Caco-2 (cell line): ENCODE measurements at regions of chr5 and their contacts with region 1.

Region 1: GRCh38 chr5:36870399-36871040 is 6.0 kb upstream of the NIPBL start:
- DNase-seq: peak in 1 of 2 experiments; percentile 61
- H3K4me3 ChIP-seq: no peak overlapping the region
- H3K4me3 Mint-ChIP-seq: no peak overlapping the region
- H3K27ac Mint-ChIP-seq: no peak overlapping the region
- H3K4me1 ChIP-seq: 0 out of 2 replicates have a peak, but pooled peaks cover 10% of the 10 kb centered on the region
- H3K4me1 Mint-ChIP-seq: peaks cover 13% of the 10 kb centered on the region
- H3K27me3 ChIP-seq: no peaks in the 10 kb centered on the region
- H3K27me3 Mint-ChIP-seq: no peaks in the 10 kb centered on the region
- CTCF ChIP-seq: peak; percentile 41 to 59

Region 2: GRCh38 chr5:36734422-36734821 is 136.1 kb before region 1 on chr5:
- CTCF ChIA-PET with region 1: interaction called, 16 read pairs
- POLR2A ChIA-PET with region 1: no interaction called
- intact Hi-C with region 1: loop called (anchors 1 kb)
- DNase-seq: peak; percentile 56 to 58
- H3K4me3 ChIP-seq: no peak overlapping the region
- H3K4me3 Mint-ChIP-seq: no peak overlapping the region
- H3K27ac Mint-ChIP-seq: no peak overlapping the region
- H3K4me1 ChIP-seq: peaks cover 1% of the 10 kb centered on the region; the same call in 1 of the 2 replicates
- H3K4me1 Mint-ChIP-seq: peaks cover 4% of the 10 kb centered on the region
- H3K27me3 ChIP-seq: no peaks in the 10 kb centered on the region
- H3K27me3 Mint-ChIP-seq: peaks cover 5% of the 10 kb centered on the region
- CTCF ChIP-seq: peak; percentile 24 to 44

Region 3: GRCh38 chr5:36739751-36740221 is 130.7 kb before region 1 on chr5:
- CTCF ChIA-PET with region 1: interaction called, 16 read pairs
- POLR2A ChIA-PET with region 1: no interaction called
- intact Hi-C with region 1: loop called (anchors 1 kb)
- DNase-seq: peak; percentile 78 to 86
- H3K4me3 ChIP-seq: no peak overlapping the region
- H3K4me3 Mint-ChIP-seq: peak overlapping the region; percentile 46
- H3K27ac Mint-ChIP-seq: no peak overlapping the region
- H3K4me1 ChIP-seq: peaks cover 12% of the 10 kb centered on the region
- H3K4me1 Mint-ChIP-seq: peaks cover 19% of the 10 kb centered on the region
- H3K27me3 ChIP-seq: no peaks in the 10 kb centered on the region
- H3K27me3 Mint-ChIP-seq: peaks cover 5% of the 10 kb centered on the region
- CTCF ChIP-seq: peak; percentile 91 to 94

Region 4: DNA sequence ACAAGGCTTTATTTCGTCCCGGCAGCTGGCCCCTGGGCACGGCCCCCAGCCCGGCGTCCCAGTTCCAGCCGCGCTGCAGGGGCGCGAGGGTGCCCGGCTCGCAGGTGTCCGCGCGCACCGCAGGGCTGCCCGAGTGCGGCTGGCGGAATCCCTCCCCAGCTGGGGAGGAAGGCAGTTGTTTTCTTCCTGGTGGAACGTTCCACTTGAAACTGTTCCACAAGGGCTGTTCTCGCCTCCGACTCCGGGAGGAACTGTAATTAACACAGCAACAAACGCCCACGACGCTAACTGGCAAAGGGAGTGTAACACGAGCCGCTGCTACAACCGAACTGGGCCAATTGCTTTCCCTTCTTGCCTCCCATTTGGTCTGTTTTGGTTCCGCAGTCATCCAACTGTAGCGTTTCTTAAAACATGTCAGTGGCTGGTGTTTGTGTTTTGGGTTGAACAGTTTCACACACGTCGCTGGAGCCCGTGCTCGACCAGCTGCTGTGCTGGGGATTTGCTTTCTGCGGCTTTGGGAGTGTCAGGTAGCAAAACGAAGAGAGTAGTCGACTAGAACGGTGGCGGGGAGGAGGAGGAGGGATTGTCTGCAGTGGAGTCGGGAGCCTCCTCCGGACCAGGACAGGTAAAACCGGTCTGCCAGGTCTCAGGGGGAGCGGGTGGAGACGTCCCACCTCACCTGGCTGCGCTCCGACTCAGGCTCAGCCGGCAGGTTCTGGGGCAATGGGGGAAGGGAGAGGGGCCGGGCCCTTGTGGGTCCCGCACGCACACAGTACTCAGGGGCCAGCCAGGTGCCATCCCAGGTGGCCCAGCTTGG is 125.5 kb before region 1 on chr5:
- CTCF ChIA-PET with region 1: interaction called, 8 read pairs
- POLR2A ChIA-PET with region 1: no interaction called
- intact Hi-C with region 1: loop called (anchors 1 kb)
- DNase-seq: peak; percentile 93 to 94
- H3K4me3 ChIP-seq: peak overlapping the region; percentile 63
- H3K4me3 Mint-ChIP-seq: peak overlapping the region; percentile 98
- H3K27ac Mint-ChIP-seq: peak overlapping the region; percentile 57
- H3K4me1 ChIP-seq: peaks cover 12% of the 10 kb centered on the region
- H3K4me1 Mint-ChIP-seq: peaks cover 15% of the 10 kb centered on the region
- H3K27me3 ChIP-seq: no peaks in the 10 kb centered on the region; the same call in 1 of the 2 replicates
- H3K27me3 Mint-ChIP-seq: peaks cover 11% of the 10 kb centered on the region
- CTCF ChIP-seq: peak in 1 of 2 experiments; percentile 82

Region 5: DNA sequence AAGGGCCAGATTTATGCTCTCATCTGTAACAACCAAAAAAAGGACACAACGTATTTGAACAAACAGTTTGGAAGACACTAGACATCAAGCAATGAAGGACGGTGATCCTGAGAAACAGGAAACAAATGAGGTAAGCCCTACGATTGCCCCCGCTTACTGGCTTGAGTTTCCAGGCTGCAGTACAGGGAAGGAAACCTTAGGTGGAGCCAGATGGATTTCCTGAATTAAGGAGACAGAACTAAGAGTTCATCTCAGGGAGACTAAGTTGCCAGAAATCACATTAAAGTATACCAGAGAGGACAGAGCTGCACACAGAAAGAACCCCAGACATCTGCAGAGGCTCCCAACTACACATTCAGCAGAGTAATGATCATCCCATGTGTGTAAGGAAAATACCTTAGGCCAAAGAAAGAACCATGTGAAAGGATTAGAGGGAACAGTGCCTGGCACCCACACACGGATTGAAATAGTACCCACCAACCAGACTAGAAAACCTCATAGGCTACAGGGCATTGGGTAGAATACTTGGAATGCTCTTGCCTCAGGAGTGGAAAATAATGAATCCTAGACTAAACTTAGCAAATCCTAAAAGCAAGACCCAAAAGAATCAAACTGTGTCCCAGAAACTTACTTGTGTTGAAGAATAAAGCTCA is 93.3 kb before region 1 on chr5:
- CTCF ChIA-PET with region 1: interaction called, 11 read pairs
- POLR2A ChIA-PET with region 1: no interaction called
- intact Hi-C with region 1: loop called (anchors 1 kb)
- DNase-seq: peak; percentile 44 to 54
- H3K4me3 ChIP-seq: no peak overlapping the region
- H3K4me3 Mint-ChIP-seq: no peak overlapping the region
- H3K27ac Mint-ChIP-seq: no peak overlapping the region
- H3K4me1 ChIP-seq: no peaks in the 10 kb centered on the region
- H3K4me1 Mint-ChIP-seq: no peaks in the 10 kb centered on the region
- H3K27me3 ChIP-seq: no peaks in the 10 kb centered on the region
- H3K27me3 Mint-ChIP-seq: no peaks in the 10 kb centered on the region
- CTCF ChIP-seq: peak; percentile 25 to 71

Region 6: DNA sequence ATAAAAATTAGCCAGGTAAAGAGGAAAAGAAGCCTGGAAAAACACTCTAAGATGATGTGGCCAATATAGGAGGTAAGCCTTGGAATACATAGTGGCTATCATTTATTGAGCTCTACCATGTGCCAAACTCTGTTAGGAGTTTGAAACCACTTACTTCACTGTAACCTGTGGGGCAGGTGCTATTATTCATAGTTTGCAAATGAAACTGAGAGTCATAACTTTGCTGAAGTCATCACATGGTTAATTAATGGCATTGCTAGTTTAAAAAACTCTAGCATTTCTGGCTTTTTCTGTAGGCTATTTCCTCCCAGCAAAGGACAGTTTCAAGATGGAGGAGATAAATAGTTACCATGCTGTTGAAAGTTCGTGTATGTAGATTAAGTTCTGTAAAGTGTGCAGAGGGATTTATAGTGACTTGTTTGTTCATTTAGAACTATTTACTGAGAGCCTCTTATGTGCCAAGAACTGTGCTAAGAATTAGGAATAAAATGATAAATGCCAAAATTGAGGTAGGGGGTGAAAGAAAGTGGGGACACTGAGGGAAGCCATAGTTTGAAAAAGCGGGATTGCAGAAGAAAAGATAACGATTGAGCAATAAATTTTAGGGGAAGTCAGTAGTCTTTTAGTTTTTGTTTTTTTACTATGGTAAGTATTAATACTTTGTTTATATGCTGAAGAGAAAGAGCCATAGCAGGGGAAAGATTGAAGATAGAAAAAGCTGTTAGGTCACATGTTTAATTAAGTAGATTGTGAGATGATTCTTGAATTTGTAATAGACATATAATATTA is 565.8 kb after region 1 on chr5:
- CTCF ChIA-PET with region 1: no interaction called
- POLR2A ChIA-PET with region 1: no interaction called
- intact Hi-C with region 1: no loop called
- DNase-seq: no peak
- H3K4me3 ChIP-seq: no peak overlapping the region
- H3K4me3 Mint-ChIP-seq: no peak overlapping the region
- H3K27ac Mint-ChIP-seq: no peak overlapping the region
- H3K4me1 ChIP-seq: peaks cover 10% of the 10 kb centered on the region
- H3K4me1 Mint-ChIP-seq: peaks cover 6% of the 10 kb centered on the region
- H3K27me3 ChIP-seq: no peaks in the 10 kb centered on the region
- H3K27me3 Mint-ChIP-seq: no peaks in the 10 kb centered on the region
- CTCF ChIP-seq: no peak